Gastrocnemius medialis (tissue), 4 donors: ENCODE measurements at regions of chr3 and their contacts with region 1.

Region 1: DNA sequence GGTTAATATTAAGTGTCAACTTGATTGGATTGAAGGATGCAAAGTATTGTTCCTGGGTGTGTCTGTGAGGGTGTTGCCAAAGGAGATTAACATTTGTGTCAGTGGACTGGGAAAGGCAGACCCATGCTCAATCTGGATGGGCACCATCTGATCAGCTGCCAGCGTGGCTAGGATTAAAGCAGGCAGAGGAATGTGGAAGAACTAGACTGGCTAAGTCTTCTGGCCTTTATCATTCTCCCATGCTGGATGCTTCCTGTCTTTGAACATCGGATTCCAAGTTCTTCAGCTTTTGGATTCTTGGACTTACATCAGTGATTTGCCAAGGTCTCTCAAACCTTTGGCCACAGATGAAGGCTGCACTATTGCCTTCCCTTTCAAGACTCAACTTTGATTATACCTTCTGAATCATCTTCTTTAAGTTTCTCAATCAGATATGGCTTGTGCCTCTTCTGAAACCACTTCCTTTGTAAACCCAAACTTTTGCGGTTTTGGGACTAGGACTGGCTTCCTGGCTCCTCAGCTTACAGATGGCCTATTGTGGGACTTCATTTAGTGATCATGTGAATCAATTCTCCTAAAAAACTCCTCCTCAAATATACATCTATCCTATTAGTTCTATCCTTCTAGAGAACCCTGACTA is 47.0 kb upstream of the CADPS start:
- DNase-seq: no peak
- ATAC-seq: no peak
- H3K4me3 ChIP-seq: no peak overlapping the region
- H3K27ac ChIP-seq: no peak overlapping the region
- H3K4me1 ChIP-seq: no peaks in the 10 kb centered on the region
- H3K27me3 ChIP-seq: no peaks in the 10 kb centered on the region
- CTCF ChIP-seq: no peak
- POLR2A ChIP-seq: no peak

Region 2: GRCh38 chr3:62818347-62818746 is 103.9 kb before region 1 on chr3:
- in situ Hi-C with region 1: loop called in 1 of 4 experiments (anchors 25 kb)
- intact Hi-C with region 1: no loop called
- DNase-seq: no peak
- ATAC-seq: no peak
- H3K4me3 ChIP-seq: no peak overlapping the region
- H3K27ac ChIP-seq: no peak overlapping the region
- H3K4me1 ChIP-seq: no peaks in the 10 kb centered on the region
- H3K27me3 ChIP-seq: no peaks in the 10 kb centered on the region
- CTCF ChIP-seq: no peak
- POLR2A ChIP-seq: no peak